ENCODE measurements at regions of chr2 and their contacts with region 1.

Region 1: DNA sequence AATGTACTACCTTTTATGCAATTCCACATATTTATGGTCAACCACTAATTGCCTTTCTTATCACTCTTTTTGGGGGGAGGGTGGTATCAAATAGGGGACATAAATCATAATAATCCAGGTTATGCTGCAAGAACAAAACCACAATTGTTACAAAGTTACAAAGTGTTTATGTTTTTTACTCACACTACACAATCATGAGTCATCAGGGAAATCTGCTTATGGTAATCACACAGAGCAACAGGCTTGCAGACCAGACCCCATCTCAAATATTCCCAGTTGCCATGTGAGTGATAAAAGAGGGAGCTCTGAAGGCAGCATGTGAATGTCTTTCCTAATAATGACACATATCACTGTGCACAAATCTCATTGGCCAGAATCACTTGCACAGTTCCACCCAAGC is 304.7 kb upstream of the TMEFF2 start:
- DNase-seq: no peak
- H3K4me3 Mint-ChIP-seq: no peak overlapping the region
- H3K27ac Mint-ChIP-seq: no peak overlapping the region
- H3K4me1 Mint-ChIP-seq: peaks cover 11% of the 10 kb centered on the region
- H3K27me3 Mint-ChIP-seq: no peaks in the 10 kb centered on the region

Region 2: DNA sequence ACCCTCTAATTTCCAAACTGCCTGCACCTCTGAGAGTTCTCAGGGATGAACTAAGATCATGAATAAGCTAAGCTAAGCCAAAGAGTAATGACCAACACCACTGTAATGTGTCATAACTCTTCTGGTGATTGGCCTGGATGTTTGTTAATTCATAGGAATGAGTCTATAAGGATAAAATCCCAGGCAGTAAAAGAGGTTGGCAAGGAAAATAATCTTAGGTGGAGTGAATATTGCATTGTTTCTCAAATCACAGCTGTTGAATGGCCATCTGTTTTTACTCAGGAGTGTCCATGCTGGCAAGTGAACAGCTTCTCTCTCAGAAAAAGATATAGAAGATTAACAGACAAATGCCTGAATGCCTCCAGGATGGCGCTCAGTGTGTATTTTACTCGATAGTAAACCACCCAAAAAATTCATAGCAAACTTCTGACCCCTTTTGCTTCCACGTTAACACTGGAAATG is 1679.6 kb before region 1 on chr2:
- intact Hi-C with region 1: loop called (anchors 10 kb)
- DNase-seq: no peak
- H3K4me3 Mint-ChIP-seq: no peak overlapping the region
- H3K27ac Mint-ChIP-seq: no peak overlapping the region
- H3K4me1 Mint-ChIP-seq: no peaks in the 10 kb centered on the region
- H3K27me3 Mint-ChIP-seq: no peaks in the 10 kb centered on the region

Measured in activated T-helper 1 cell treated with anti-CD3 and anti-CD28 coated beads, Interleukin-12 subunit alpha, Interleukin-12 subunit beta, Interleukin-2, Interleukin-4 antibody, amounts not matched to agents 30 ng/mL and 10 ng/mL and 1 ng/mL, durations not matched to agents 14 hours and 24 hours and 36 hours (primary cell).